H1 (cell line): ENCODE measurements at regions of chr12 and their contacts with region 1.

Region 1: GRCh38 chr12:7042842-7043241 is 17.7 kb upstream of the C1S start:
- DNase-seq: no peak
- H3K4me3 ChIP-seq: no peak overlapping the region
- H3K27ac ChIP-seq: no peak overlapping the region
- H3K4me1 ChIP-seq: no peaks in the 10 kb centered on the region
- H3K27me3 ChIP-seq: no peaks in the 10 kb centered on the region
- CTCF ChIP-seq: peak in 2 of 3 experiments; percentile 31 to 39; a peak in 2 of 4 replicates
- EP300 ChIP-seq: no peak
- POLR2A ChIP-seq: no peak
- RAD21 ChIP-seq: peak; percentile 47 to 57

Region 2: GRCh38 chr12:6723607-6724396 is 319.0 kb before region 1 on chr12 and contains the start of gene COPS7A:
- CTCF ChIA-PET with region 1: no interaction called
- POLR2A ChIA-PET with region 1: no interaction called
- DNase-seq: peak; percentile 95 to 98
- H3K4me3 ChIP-seq: peak within 1 kb of the TSS; percentile 58 to 91 (median 78)
- H3K27ac ChIP-seq: no peak within 1 kb of the TSS; the same call in 1 of the 2 replicates
- H3K4me1 ChIP-seq: peaks cover 0 to 2% (median under 1%) of the 10 kb centered on the region in 4 experiments; a peak in 3 of 7 replicates
- H3K27me3 ChIP-seq: no peaks in the 10 kb centered on the region; a peak in 2 of 7 replicates
- CTCF ChIP-seq: peak in 1 of 3 experiments; percentile 24; a peak in 1 of 4 replicates
- EP300 ChIP-seq: peak; percentile 21 to 63; a peak in 1 of 3 replicates
- POLR2A ChIP-seq: peak in 1 of 2 experiments; percentile 54; a peak in 2 of 3 replicates
- RAD21 ChIP-seq: 0 out of 4 replicates have a peak, but pooled peaks of 1 of the 2 experiments have one; percentile 2
- total RNA-seq, gene COPS7A: 43.3 and 44.5 TPM in 2 replicates

Region 3: GRCh38 chr12:7018350-7019042 is 24.3 kb before region 1 on chr12 and contains the start of gene LPCAT3:
- CTCF ChIA-PET with region 1: interaction called, 14 read pairs
- POLR2A ChIA-PET with region 1: interaction called, 3 read pairs
- DNase-seq: peak; percentile 86 to 98
- H3K4me3 ChIP-seq: peak within 1 kb of the TSS; percentile 74 to 91 (median 80)
- H3K27ac ChIP-seq: peak within 1 kb of the TSS; percentile 76; the same call in 1 of the 2 replicates
- H3K4me1 ChIP-seq: peaks cover 0 to 3% (median under 1%) of the 10 kb centered on the region in 4 experiments; a peak in 2 of 7 replicates
- H3K27me3 ChIP-seq: no peaks in the 10 kb centered on the region
- CTCF ChIP-seq: peak; percentile 73 to 84 (median 77)
- EP300 ChIP-seq: peak in 1 of 2 experiments; percentile 66; a peak in 1 of 3 replicates
- POLR2A ChIP-seq: peak; percentile 13 to 37; a peak in 2 of 3 replicates
- RAD21 ChIP-seq: peak; percentile 53 to 64
- total RNA-seq, gene LPCAT3: 55.2 and 55.8 TPM in 2 replicates

Region 4: GRCh38 chr12:7031306-7031705 is 11.5 kb before region 1 on chr12:
- CTCF ChIA-PET with region 1: interaction called, 12 read pairs
- POLR2A ChIA-PET with region 1: interaction called, 4 read pairs
- DNase-seq: no peak
- H3K4me3 ChIP-seq: no peak overlapping the region
- H3K27ac ChIP-seq: no peak overlapping the region
- H3K4me1 ChIP-seq: no peaks in the 10 kb centered on the region; a peak in 2 of 7 replicates
- H3K27me3 ChIP-seq: no peaks in the 10 kb centered on the region
- CTCF ChIP-seq: no peak
- EP300 ChIP-seq: no peak
- POLR2A ChIP-seq: no peak
- RAD21 ChIP-seq: no peak

Region 5: GRCh38 chr12:7054925-7055324 is 12.1 kb after region 1 on chr12:
- CTCF ChIA-PET with region 1: interaction called, 13 read pairs
- POLR2A ChIA-PET with region 1: no interaction called
- DNase-seq: no peak
- H3K4me3 ChIP-seq: no peak overlapping the region
- H3K27ac ChIP-seq: no peak overlapping the region
- H3K4me1 ChIP-seq: no peaks in the 10 kb centered on the region
- H3K27me3 ChIP-seq: no peaks in the 10 kb centered on the region
- CTCF ChIP-seq: no peak
- EP300 ChIP-seq: no peak
- POLR2A ChIP-seq: no peak
- RAD21 ChIP-seq: no peak

Region 6: DNA sequence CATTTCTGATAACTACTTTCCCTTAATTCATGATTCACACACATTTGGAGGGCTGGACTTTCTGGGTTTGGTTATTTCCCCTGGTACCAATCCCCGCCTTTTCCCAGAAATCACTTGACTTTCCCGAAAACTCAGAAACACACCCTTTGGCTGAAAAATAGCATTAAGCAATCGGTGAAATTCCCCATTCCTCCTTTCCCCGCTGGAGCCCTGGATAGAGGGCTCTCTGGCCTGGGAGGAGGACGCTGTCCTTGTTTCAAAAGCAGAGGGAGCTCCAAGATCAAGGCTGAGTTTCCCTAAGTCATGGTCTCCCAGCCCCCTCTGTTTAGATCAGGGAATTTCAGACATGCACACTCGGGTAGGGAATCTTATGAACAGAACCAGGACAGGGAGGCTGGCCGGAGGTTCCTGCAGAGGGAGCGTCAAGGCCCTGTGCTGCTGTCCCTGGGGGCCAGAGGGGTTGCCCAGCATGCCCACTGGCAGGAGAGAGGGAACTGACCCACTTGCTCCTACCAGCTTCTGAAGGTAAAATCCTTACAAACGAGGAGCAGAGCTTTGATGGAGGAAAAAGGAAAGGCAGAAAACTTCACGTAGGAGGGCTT is 17.6 kb after region 1 on chr12 and contains the start of gene C1S:
- CTCF ChIA-PET with region 1: interaction called, 13 read pairs
- POLR2A ChIA-PET with region 1: no interaction called
- DNase-seq: peak; percentile 36 to 63
- H3K4me3 ChIP-seq: no peak within 1 kb of the TSS
- H3K27ac ChIP-seq: no peak within 1 kb of the TSS
- H3K4me1 ChIP-seq: peaks cover 0 to 5% (median 2%) of the 10 kb centered on the region in 4 experiments; a peak in 3 of 7 replicates
- H3K27me3 ChIP-seq: no peaks in the 10 kb centered on the region
- CTCF ChIP-seq: peak; percentile 49 to 96 (median 78)
- EP300 ChIP-seq: no peak
- POLR2A ChIP-seq: no peak
- RAD21 ChIP-seq: peak; percentile 91 to 94
- total RNA-seq, gene C1S: 5.0 and 7.3 TPM in 2 replicates

Region 7: DNA sequence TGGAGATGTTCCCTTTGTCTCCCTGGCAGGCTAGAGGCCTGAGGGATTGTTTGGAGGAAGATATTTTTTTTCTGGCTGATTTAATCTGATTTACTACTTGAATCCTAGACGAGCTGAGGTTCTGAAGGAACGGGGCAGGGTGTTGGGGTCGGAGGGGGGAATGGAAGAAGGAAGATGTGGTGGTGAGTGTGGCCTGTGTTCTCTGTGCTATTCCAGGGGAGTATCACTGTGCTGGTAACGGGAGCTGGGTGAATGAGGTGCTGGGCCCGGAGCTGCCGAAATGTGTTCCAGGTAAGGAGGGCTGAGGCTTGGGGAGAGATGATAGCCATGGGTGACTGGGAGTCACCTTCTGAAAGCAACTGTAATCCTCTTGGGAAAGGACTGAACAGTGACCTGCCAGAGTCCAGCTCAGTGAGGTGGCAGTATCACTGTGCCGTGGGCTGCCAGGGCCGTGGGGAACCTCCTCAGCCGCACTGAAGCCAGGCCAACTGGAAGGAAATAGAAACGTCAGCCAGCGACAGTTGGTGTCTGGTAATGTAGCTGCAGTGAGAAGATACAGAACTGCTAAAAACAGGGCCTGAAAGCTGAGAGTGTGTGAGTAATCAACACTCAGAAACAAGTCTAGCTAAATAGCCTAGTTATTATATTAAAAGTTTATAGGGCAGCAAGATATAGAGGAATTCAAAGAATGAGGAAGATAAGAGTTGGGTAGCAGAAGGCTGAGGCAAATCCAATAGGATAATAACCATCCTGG is 25.6 kb after region 1 on chr12:
- CTCF ChIA-PET with region 1: interaction called, 12 read pairs
- POLR2A ChIA-PET with region 1: no interaction called
- DNase-seq: no peak
- H3K4me3 ChIP-seq: no peak overlapping the region
- H3K27ac ChIP-seq: no peak overlapping the region
- H3K4me1 ChIP-seq: no peaks in the 10 kb centered on the region
- H3K27me3 ChIP-seq: no peaks in the 10 kb centered on the region
- CTCF ChIP-seq: no peak
- EP300 ChIP-seq: no peak
- POLR2A ChIP-seq: no peak
- RAD21 ChIP-seq: no peak